HepG2 (cell line): ENCODE measurements at regions of chr12 and their contacts with region 1.

Region 1: DNA sequence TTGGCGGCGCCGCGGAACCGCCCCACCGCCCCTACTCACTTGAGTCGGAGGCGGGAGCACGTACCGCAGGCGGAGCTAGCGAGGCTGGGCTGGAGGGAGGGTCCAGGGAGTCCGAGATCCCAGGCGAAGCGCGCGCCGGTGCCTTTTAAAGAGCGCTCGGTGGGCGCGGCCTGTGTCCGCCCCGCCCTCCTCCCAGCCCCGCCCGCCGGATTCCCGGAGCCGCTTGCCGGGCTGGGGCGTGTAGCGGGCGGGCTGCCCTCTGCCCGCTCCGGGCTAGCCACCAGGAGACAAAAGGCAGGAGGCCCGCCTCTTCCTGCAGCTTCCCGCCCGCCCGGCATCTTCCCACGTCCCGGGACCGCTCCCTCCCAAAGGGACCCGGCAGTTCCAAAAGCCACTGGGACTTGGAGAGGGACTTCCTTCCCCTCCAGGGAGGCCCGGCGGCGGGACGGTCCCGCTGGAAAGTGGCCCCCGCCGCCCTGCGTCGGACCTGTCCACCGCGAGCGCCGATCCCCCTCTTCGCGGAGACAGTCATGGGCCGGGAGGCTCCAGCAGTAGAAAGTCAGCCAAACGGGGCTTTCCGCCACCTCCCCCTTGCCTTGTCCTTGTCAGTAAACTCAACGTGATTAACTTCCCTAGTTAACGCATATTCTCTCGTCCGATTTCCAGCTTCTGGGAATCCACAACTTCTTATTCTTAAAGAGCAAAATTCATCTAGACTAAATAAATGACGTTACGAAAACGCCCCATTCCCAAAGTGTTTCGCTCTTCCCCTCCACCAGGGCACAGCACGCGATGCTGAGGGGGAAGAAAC is at the start of gene CSRP2:
- DNase-seq: peak; percentile 79
- ATAC-seq: peak; percentile 93
- H3K4me3 ChIP-seq: peak within 1 kb of the TSS; percentile 72 to 85 (median 77)
- H3K27ac ChIP-seq: no peak within 1 kb of the TSS
- H3K4me1 ChIP-seq: peaks cover 24% of the 10 kb centered on the region
- H3K27me3 ChIP-seq: peaks cover 0 to 5% of the 10 kb centered on the region in 2 experiments; a peak in 1 of 5 replicates
- CTCF ChIP-seq: no peak
- EP300 ChIP-seq: no peak
- POLR2A ChIP-seq: peak in 1 of 2 experiments; percentile 75; a peak in 2 of 4 replicates
- RAD21 ChIP-seq: no peak
- total RNA-seq, gene CSRP2: 7.2 and 9.0 TPM in 2 replicates

Region 2: GRCh38 chr12:76645934-76646333 is 233.2 kb before region 1 on chr12:
- CTCF ChIA-PET with region 1: no interaction called
- POLR2A ChIA-PET with region 1: no interaction called
- in situ Hi-C with region 1: no loop called
- intact Hi-C with region 1: no loop called
- DNase-seq: no peak
- ATAC-seq: no peak; the same call in 2 of the 3 replicates
- H3K4me3 ChIP-seq: no peak overlapping the region
- H3K27ac ChIP-seq: no peak overlapping the region
- H3K4me1 ChIP-seq: no peaks in the 10 kb centered on the region
- H3K27me3 ChIP-seq: peaks cover 0 to 2% of the 10 kb centered on the region in 2 experiments; a peak in 1 of 5 replicates
- CTCF ChIP-seq: no peak
- EP300 ChIP-seq: no peak
- POLR2A ChIP-seq: no peak
- RAD21 ChIP-seq: no peak

Region 3: DNA sequence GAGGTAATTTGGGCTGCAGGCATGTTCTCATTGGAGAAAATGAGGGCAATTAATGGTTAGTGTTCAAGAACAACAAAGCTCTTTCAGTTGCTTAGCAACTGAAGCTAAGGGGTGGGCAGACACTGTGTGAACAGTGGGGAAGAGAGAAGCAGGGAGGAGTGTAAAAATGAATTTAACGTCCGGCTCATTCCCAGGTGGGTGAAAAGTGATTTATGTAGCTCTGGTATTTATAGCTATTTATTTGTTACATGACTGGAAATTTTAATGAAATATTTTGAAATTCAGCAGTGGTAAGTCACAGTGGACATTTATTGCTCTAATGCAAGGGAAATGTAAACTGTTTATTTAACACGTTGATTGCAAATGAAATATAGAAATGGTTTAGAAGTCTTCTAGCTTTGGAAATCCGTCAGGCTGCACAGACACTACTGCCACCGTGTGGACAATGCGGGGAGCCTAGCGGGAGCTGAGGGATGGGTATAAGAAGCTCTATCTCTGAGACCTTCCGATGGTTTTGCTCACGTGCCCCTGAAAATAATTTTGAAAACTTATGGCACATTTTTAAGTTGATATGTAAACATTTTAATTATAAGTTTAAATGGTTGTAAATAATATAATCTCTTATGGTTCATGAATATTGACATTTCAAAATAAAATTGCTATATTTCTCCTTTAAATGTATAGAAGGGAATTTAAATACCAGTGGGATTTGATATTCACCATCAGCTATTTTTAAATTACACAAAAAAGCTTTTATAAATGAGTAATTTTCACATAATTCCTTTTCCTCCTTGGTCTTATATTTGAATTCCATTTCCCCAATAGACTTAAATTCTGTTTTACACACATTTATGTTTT is 131.8 kb after region 1 on chr12:
- CTCF ChIA-PET with region 1: no interaction called
- POLR2A ChIA-PET with region 1: no interaction called
- in situ Hi-C with region 1: no loop called
- intact Hi-C with region 1: loop called (anchors 5 kb)
- DNase-seq: peak; percentile 49
- ATAC-seq: peak; percentile 97
- H3K4me3 ChIP-seq: no peak overlapping the region
- H3K27ac ChIP-seq: no peak overlapping the region
- H3K4me1 ChIP-seq: peaks cover 7% of the 10 kb centered on the region; the same call in 1 of the 2 replicates
- H3K27me3 ChIP-seq: peaks cover 0 to 5% of the 10 kb centered on the region in 2 experiments; a peak in 1 of 5 replicates
- CTCF ChIP-seq: peak; percentile 81
- EP300 ChIP-seq: no peak
- POLR2A ChIP-seq: no peak
- RAD21 ChIP-seq: peak; percentile 49; the same call in 1 of the 2 replicates